Dendritic cell treated with granulocyte-macrophage colony-stimulating factor and Interleukin-4, amounts not matched to agents 40 ng/mL and 50 ng/mL, for 4 days (primary cell): ENCODE measurements at regions of chr3 and their contacts with region 1.

Region 1: GRCh38 chr3:66998113-66998903 is at the start of gene KBTBD8:
- H3K4me3 Mint-ChIP-seq: peak within 1 kb of the TSS; percentile 87
- H3K27ac Mint-ChIP-seq: peak within 1 kb of the TSS; percentile 85
- H3K4me1 Mint-ChIP-seq: peaks cover 9% of the 10 kb centered on the region
- H3K27me3 Mint-ChIP-seq: peaks cover 3% of the 10 kb centered on the region

Region 2: DNA sequence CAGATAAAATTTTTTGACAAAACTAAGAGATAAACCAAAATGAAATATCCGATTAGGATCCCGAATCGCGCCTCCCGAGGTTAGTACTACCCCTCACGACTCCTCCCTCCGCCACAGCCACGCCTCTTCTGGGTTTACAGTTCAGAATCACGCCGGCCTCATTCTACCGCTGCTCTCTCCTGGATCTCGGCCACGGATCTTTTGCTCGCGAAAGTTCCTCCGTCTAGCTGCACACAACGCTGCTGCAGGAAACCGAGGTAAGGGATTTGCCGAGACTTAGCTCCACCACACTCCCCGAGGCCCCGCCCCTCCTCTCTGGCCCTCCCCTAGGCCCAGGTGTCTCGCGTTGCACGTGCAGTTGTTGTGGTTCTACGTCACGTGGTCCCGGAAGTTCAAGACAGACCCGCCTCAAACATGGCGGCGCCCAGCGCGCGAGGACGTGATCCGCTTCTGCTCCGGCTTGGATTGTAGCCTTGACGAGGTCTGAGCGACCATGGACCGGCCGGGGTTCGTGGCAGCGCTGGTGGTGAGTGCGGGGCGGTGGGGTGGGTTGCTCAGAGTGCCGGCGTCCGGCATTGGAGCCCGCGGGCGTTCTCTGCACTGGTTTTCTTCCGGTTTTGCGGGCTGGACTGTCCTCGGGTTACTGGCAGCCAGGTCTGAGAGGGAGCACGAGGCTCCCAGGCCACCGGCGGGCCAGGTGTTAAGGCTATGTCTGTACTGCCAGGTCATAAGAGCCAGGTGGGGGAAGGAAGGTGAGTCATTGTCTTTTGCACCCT is 777.5 kb before region 1 on chr3 and contains the start of gene SLC25A26:
- intact Hi-C with region 1: loop called (anchors 5 kb)
- H3K4me3 Mint-ChIP-seq: peak within 1 kb of the TSS; percentile 92
- H3K27ac Mint-ChIP-seq: peak within 1 kb of the TSS; percentile 85
- H3K4me1 Mint-ChIP-seq: peaks cover 29% of the 10 kb centered on the region
- H3K27me3 Mint-ChIP-seq: peaks cover 6% of the 10 kb centered on the region

Region 3: DNA sequence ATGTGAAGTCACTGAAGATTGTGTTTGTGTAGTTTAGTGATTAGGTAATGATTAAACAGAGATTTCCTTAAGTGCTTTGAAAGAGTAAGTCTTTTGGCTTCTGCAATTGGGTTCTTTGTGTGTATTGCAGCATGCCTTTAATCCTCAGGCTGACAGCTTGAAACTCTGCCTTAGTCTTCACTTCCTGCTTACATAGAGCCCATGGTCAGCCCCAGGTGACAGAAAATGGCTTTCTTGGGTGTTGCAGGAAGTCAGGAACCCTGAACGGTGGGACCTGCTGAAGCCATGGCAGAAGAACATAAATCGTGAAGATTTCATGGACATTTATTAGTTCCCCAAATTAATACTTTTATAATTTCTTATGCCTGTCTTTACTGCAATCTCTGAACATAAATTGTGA is 61.1 kb after region 1 on chr3:
- intact Hi-C with region 1: no loop called
- H3K4me3 Mint-ChIP-seq: no peak overlapping the region
- H3K27ac Mint-ChIP-seq: no peak overlapping the region
- H3K4me1 Mint-ChIP-seq: no peaks in the 10 kb centered on the region
- H3K27me3 Mint-ChIP-seq: peaks cover 12% of the 10 kb centered on the region

Region 4: DNA sequence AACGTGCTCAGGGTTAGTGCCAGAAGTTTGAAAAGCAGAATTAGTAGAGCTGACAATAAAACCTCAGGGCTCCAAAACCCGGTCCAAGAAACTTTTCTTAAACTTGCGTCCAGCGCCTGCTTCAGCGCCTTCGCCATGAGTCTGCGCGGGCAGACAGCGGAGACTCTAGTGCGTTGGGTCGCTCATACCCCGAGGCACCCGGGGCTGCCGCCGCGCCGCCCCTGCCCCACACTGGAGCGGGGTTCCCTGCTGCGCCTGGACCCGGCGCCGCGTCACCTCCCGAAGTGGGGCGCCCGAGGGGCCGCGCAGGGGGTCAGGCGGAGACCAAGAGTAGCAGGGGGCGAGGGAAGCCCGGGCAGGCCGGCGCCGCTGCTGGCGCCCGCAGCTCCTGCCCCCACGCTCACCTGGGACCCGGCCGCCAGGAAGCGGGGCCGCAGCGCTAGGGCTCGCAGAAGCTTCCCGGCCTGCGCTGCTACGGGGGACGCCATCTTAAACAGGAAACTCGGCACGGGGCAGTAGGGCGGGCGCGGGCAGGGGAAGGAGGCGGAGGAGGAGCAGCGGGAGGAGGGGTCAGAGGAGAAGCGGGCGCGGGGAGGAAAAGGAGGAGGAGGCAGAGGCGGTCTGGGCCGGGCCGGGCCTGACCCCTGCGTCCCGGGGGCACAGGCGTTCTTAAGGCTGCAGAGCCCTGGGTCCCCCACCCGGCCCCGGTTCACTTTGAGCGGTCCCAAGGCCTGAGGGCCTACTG is 656.0 kb after region 1 on chr3 and contains the start of gene SUCLG2:
- intact Hi-C with region 1: loop called (anchors 2 kb)
- H3K4me3 Mint-ChIP-seq: peak within 1 kb of the TSS; percentile 73
- H3K27ac Mint-ChIP-seq: peak within 1 kb of the TSS; percentile 73
- H3K4me1 Mint-ChIP-seq: peaks cover 34% of the 10 kb centered on the region
- H3K27me3 Mint-ChIP-seq: peaks cover 35% of the 10 kb centered on the region